Breast epithelium (tissue), 4 donors: ENCODE measurements at regions of chr5 and their contacts with region 1.

Region 1: DNA sequence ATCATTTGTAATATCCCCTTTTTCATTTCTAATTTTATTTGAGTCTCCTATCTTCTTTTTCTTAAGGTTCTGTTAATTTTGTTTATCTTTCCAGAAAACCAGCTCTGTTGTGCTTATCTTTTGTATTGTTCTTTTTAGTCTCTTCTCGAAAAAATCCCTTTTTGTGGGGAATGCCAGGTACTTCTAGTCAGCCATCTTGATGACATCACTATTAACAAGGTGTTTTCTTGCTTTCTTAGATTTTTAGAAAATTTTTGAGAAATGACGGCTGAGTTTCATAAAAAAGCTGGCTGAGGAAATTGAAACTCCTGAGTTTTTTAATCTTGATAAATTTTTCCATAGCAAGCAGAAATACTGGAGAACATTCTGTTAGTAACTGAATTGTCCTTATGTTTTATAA is 10.7 kb downstream of the RNF180 start:
- DNase-seq: no peak
- H3K4me3 ChIP-seq: no peak overlapping the region
- H3K27ac ChIP-seq: no peak overlapping the region
- H3K4me1 ChIP-seq: no peaks in the 10 kb centered on the region
- H3K27me3 ChIP-seq: no peaks in the 10 kb centered on the region
- CTCF ChIP-seq: no peak
- POLR2A ChIP-seq: no peak

Region 2: DNA sequence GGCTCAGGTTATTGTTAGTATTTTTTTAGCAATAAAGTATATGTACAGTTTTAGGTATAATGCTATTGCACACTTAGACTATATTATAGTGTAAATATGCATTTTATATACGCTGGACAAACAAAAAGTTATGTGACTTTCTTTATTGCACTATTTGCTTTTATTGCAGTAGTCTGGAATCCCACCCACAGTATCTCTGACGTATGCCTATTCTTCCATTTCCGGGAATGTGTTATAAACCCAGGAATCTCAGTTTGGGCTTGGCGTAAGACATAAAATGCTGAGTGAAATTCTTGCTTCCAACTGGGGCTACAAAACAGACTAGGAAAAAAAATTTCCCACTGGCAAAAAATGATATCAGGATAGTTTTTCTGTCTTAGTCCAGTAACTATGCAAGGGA is 333.1 kb before region 1 on chr5:
- intact Hi-C with region 1: no loop called
- DNase-seq: no peak
- H3K4me3 ChIP-seq: no peak overlapping the region
- H3K27ac ChIP-seq: no peak overlapping the region
- H3K4me1 ChIP-seq: no peaks in the 10 kb centered on the region
- H3K27me3 ChIP-seq: no peaks in the 10 kb centered on the region
- CTCF ChIP-seq: no peak
- POLR2A ChIP-seq: no peak

Region 3: GRCh38 chr5:64207978-64208377 is 31.7 kb after region 1 on chr5:
- intact Hi-C with region 1: loop called (anchors 2 kb)
- DNase-seq: no peak
- H3K4me3 ChIP-seq: no peak overlapping the region
- H3K27ac ChIP-seq: no peak overlapping the region
- H3K4me1 ChIP-seq: no peaks in the 10 kb centered on the region
- H3K27me3 ChIP-seq: no peaks in the 10 kb centered on the region
- CTCF ChIP-seq: peak in 1 of 3 donors; percentile 8
- POLR2A ChIP-seq: no peak

Region 4: DNA sequence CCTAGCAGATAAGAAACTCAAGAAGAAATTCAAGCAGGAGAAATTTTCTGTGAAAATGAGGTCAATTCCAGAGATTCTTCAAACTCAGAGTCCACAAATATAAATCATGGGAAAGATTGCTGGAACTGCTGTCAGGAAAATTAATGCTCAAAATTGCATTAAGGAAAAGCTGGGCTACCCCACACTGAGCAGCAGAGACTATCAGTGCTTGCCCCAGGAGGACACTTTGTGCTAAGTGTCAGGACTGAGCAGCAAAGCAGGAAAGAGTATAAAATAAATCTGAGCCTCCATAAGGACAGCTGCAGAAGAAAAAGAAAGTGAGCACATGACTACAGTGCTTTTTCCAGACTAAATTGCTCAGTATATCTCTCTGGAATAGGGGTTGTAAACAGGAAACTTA is 411.1 kb after region 1 on chr5:
- intact Hi-C with region 1: no loop called
- DNase-seq: no peak
- H3K4me3 ChIP-seq: no peak overlapping the region
- H3K27ac ChIP-seq: no peak overlapping the region
- H3K4me1 ChIP-seq: no peaks in the 10 kb centered on the region
- H3K27me3 ChIP-seq: no peaks in the 10 kb centered on the region
- CTCF ChIP-seq: no peak
- POLR2A ChIP-seq: no peak